ENCODE measurements at regions of chr20 and their contacts with region 1.

Region 1: DNA sequence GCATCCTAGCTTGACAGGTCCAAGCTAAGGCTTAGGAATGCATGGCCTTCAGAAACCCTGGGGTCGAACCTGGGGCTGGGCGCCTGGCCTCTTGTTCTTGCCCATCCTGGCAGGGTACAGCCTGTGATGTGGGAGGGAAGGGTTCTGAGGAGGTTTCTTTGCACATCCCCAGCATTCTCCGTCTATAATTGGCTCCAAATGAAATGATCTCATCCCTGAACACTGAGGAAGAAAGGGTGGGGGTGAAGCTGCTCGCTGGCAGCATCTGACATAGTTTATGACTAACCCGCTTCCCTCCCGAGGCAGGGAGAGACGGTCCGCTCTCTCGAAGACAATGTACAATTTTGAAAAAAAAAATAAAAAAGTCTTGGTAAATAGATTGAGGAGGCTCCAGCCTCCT is 67.1 kb upstream of the ZNFX1 start:
- DNase-seq: peak; percentile 41
- H3K4me3 ChIP-seq: no peak overlapping the region
- H3K27ac ChIP-seq: peak overlapping the region; percentile 33 to 79 (median 54)
- H3K4me1 ChIP-seq: peaks cover 3 to 10% (median 9%) of the 10 kb centered on the region in 4 donors
- H3K27me3 ChIP-seq: no peaks in the 10 kb centered on the region
- CTCF ChIP-seq: no peak
- EP300 ChIP-seq: no peak
- POLR2A ChIP-seq: no peak

Region 2: DNA sequence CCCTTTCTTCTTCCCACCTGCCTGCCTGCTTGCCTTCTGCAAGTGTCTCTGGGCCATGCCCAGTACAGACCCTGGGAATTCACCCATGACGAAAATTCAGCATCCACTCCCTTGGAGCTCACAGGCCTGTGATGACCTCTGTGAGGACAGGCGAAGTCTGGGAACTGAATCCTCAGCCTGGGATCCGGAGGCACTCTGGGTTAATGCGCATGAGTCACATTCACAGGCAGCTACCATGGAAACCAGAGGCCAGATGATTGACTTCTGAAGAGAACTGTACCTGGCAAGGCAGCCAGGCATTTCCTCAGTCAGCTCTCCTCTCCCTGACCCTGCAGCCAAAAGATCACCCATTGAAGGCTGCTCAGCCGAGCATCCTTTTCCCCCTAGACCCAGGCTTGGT is 508.7 kb after region 1 on chr20:
- in situ Hi-C with region 1: loop called in 2 of 4 experiments (anchors 25 kb)
- intact Hi-C with region 1: no loop called
- DNase-seq: no peak
- H3K4me3 ChIP-seq: no peak overlapping the region
- H3K27ac ChIP-seq: no peak overlapping the region
- H3K4me1 ChIP-seq: peaks cover 0 to 7% (median 0%) of the 10 kb centered on the region in 4 donors
- H3K27me3 ChIP-seq: no peaks in the 10 kb centered on the region
- CTCF ChIP-seq: no peak
- EP300 ChIP-seq: no peak
- POLR2A ChIP-seq: no peak